ENCODE measurements at regions of chr9 and their contacts with region 1.

Region 1: DNA sequence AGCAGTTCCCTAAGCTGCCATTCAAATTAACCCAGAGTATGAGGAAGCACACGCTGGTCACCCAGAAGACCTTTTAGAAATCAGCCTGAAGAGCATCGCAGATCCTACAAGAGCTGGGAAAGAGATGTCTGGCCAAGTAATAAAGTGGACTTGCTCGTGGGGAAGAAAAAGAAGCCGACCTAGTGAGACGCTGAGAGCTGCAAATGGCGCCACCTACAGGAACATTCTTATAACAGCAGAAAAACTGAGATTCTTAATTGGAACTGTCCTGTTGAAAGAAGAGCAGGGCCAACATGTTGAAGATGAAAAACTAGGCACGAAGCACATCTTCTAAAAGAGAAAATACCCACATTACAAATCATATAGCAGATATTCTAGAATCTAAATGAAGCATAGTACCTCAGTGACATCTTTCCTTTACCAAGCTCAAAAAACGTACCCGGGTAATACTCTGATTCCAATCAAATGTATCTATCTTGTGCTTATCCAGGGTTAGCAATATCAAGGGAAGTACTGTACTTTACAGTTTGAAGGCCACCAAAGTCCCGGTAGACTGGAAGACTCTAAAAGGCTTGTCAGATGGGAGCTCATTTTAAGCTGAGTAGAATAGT is 3.9 kb upstream of the GNAQ start:
- DNase-seq: peak; percentile 88
- H3K4me3 Mint-ChIP-seq: no peak overlapping the region
- H3K27ac Mint-ChIP-seq: no peak overlapping the region
- H3K4me1 Mint-ChIP-seq: peaks cover 32% of the 10 kb centered on the region
- H3K27me3 Mint-ChIP-seq: peaks cover 7% of the 10 kb centered on the region

Region 2: DNA sequence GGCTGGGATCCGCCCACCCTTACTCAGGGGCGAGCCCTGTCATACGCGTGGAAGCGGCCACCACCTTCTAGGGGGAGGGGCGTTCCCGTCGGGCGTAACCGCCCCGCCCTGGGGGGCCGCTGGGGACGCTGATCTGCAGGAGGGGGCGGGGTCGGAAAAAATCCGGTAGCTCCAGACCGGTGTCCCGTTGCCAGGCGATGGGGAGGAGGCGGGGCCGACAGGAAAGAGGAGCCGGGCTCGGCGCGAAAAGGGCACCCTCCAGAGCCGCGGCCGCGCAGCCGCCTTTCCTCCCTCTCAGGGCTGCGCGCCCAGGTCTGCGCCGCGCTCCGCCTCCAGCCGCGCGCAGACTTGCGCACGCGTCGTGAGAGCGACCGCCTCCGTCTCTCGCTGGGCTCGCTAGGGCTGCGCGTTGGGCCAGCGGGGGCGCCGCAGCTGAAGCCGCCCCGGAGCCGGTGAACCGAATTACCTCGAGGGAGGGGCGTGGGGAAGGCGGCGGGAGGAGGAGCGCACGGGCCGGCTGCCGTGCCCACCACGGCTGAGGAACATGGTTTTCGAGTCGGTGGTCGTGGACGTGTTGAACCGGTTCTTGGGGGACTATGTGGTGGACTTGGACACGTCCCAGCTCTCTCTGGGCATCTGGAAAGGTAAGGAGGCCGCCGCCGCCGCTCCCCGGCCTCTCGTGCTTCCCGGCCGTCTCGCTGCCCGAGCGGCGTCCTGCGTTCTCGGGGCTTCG is 858.2 kb before region 1 on chr9 and contains the start of gene VPS13A:
- intact Hi-C with region 1: loop called (anchors 5 kb)
- DNase-seq: peak; percentile 97
- H3K4me3 Mint-ChIP-seq: peak within 1 kb of the TSS; percentile 99
- H3K27ac Mint-ChIP-seq: peak within 1 kb of the TSS; percentile 92
- H3K4me1 Mint-ChIP-seq: peaks cover 22% of the 10 kb centered on the region
- H3K27me3 Mint-ChIP-seq: peaks cover 15% of the 10 kb centered on the region
- total RNA-seq, gene VPS13A: 44.9 and 47.7 TPM in 2 replicates

Region 3: GRCh38 chr9:77456829-77457437 is 578.6 kb before region 1 on chr9:
- intact Hi-C with region 1: loop called (anchors 2 kb)
- DNase-seq: peak; percentile 95
- H3K4me3 Mint-ChIP-seq: no peak overlapping the region
- H3K27ac Mint-ChIP-seq: no peak overlapping the region
- H3K4me1 Mint-ChIP-seq: peaks cover 25% of the 10 kb centered on the region
- H3K27me3 Mint-ChIP-seq: no peaks in the 10 kb centered on the region

Region 4: GRCh38 chr9:77841739-77842386 is 193.6 kb before region 1 on chr9:
- intact Hi-C with region 1: loop called (anchors 1 kb)
- DNase-seq: no peak
- H3K4me3 Mint-ChIP-seq: no peak overlapping the region
- H3K27ac Mint-ChIP-seq: no peak overlapping the region
- H3K4me1 Mint-ChIP-seq: peaks cover 11% of the 10 kb centered on the region
- H3K27me3 Mint-ChIP-seq: no peaks in the 10 kb centered on the region

Region 5: GRCh38 chr9:77944556-77945243 is 90.8 kb before region 1 on chr9:
- intact Hi-C with region 1: no loop called
- DNase-seq: peak; percentile 70
- H3K4me3 Mint-ChIP-seq: peak overlapping the region; percentile 59
- H3K27ac Mint-ChIP-seq: peak overlapping the region; percentile 54
- H3K4me1 Mint-ChIP-seq: peaks cover 31% of the 10 kb centered on the region
- H3K27me3 Mint-ChIP-seq: no peaks in the 10 kb centered on the region

Region 6: DNA sequence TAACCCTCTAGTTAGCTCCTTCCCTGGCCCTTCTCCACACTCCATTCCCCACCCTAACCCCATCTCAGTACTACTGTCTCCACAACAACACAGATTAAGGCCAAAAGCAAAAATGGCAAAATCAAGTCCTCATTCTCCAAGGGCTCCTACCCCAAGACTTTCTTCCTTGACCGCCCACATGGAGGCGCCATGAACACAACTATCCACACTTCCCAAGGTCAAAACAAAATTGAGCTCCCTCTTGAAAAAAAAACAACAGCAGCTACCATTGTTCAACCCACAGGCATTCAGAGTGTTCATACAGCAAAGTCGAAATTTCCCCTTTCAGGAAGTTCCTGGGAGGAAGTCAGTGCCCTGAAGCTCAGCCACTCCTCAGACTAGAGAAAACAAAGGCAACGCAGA is 58.3 kb before region 1 on chr9:
- intact Hi-C with region 1: loop called (anchors 1 kb)
- DNase-seq: peak; percentile 84
- H3K4me3 Mint-ChIP-seq: peak overlapping the region; percentile 68
- H3K27ac Mint-ChIP-seq: peak overlapping the region; percentile 91
- H3K4me1 Mint-ChIP-seq: peaks cover 44% of the 10 kb centered on the region
- H3K27me3 Mint-ChIP-seq: no peaks in the 10 kb centered on the region

Region 7: DNA sequence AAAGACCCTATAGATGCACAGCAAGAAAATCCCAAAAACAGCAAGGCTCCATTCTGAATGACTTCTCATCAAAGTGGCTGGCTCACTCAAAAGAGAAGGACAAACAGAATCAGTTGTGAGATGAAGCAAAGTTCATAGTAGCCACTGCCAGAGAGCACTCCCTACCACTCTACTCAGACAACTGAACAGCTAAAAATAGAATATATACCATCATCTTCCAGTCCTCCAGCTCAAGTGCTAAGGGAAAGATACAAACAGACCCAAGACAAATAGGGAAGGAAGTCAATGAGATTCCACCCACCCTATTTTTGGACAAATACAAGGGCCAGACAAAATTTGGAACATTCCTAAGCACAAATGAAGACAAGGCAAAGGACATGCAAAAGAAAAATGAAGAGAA is 24.4 kb before region 1 on chr9:
- intact Hi-C with region 1: loop called (anchors 2 kb)
- DNase-seq: no peak
- H3K4me3 Mint-ChIP-seq: peak overlapping the region; percentile 63
- H3K27ac Mint-ChIP-seq: peak overlapping the region; percentile 59
- H3K4me1 Mint-ChIP-seq: peaks cover 41% of the 10 kb centered on the region
- H3K27me3 Mint-ChIP-seq: no peaks in the 10 kb centered on the region

Region 8: DNA sequence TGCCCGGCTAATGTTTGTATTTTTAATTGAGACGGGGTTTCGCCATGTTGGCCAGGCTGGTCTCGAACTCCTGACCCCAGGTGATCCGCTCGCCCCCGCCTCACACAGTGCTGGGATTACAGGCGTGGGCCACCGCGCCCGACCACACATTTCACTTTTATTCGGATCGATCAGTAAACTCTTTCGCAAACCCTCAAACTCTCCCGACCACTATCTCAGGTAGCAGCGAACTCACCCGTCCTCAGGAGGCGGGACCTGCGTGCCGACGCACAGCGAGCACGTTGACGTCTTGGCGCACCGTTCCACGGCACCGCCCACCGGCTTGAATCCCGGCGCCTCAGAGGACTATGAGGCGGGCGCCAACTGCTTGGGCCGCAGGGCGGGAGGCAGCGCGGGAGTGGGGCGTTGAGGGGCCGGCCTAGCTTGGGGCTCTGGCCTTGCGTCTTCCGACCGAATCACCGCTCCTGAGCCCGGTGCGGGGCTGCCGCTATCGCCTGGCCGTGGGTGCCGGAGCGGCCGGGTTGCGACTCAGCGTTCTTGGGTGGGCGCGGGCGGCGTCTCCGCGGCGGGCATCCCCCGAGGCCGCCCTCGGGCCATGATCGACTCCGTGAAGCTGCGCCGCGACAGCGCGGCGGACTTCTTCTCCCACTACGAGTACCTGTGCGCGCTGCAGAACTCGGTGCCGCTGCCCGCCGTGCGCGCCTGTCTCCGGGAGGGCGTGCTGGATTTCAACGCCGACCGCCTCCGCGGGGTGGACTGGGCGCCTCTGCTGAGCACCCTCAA is 200.5 kb after region 1 on chr9 and contains the start of gene CEP78:
- intact Hi-C with region 1: loop called (anchors 5 kb)
- DNase-seq: peak; percentile 97
- H3K4me3 Mint-ChIP-seq: peak within 1 kb of the TSS; percentile 72
- H3K27ac Mint-ChIP-seq: peak within 1 kb of the TSS; percentile 93
- H3K4me1 Mint-ChIP-seq: peaks cover 25% of the 10 kb centered on the region
- H3K27me3 Mint-ChIP-seq: no peaks in the 10 kb centered on the region
- total RNA-seq, gene CEP78: 34.5 and 39.1 TPM in 2 replicates

Region 9: DNA sequence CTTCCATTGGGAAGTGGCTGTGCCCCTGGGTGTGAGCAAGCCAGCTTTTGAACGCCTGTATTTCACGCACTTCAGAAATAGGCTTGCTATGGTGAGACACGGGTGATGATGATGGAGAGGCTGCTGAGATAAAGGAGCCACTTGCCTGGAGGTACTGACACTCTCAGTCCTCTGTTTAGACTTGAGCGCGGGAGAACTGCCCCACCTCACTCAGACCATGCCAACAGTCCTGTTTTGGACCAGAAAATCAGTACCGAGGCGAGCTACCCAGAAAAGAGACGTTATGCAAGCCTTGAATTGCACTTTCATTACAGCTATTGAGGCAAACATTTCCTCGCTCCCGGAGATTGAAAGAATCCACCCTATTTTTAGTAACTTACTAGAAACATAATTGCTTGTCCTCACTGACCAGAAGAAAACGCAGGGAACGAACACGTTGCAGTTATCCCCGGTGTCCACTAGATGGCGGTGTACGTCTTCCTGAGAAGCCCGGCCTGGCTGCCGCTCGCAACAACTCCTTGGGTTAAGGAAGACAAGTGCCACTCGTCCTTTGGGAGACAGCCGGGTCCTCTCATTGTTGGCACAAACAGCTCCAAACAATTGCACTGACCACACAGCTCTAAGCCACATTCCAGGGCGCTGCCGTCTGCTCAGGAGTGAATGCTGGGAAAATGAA is 403.8 kb after region 1 on chr9:
- intact Hi-C with region 1: no loop called
- DNase-seq: peak; percentile 88
- H3K4me3 Mint-ChIP-seq: no peak overlapping the region
- H3K27ac Mint-ChIP-seq: no peak overlapping the region
- H3K4me1 Mint-ChIP-seq: peaks cover 6% of the 10 kb centered on the region
- H3K27me3 Mint-ChIP-seq: peaks cover 10% of the 10 kb centered on the region

Measured in activated CD4-positive, alpha-beta T cell treated with anti-CD3 and anti-CD28 coated beads, Interleukin-2, amount 10 ng/mL, durations not matched to agents 24 days and 14 days (primary cell).